Activated naive CD4-positive, alpha-beta T cell treated with anti-CD3 and anti-CD28 coated beads, Interleukin-2, amount 10 ng/mL, durations not matched to agents 7 days and 5 days (primary cell): ENCODE measurements at regions of chr5 and their contacts with region 1.

Region 1: GRCh38 chr5:74919487-74919886 is 53.3 kb upstream of the FAM169A start:
- DNase-seq: no peak
- H3K4me3 Mint-ChIP-seq: no peak overlapping the region
- H3K27ac Mint-ChIP-seq: no peak overlapping the region
- H3K4me1 Mint-ChIP-seq: no peaks in the 10 kb centered on the region
- H3K27me3 Mint-ChIP-seq: peaks cover 8% of the 10 kb centered on the region

Region 2: DNA sequence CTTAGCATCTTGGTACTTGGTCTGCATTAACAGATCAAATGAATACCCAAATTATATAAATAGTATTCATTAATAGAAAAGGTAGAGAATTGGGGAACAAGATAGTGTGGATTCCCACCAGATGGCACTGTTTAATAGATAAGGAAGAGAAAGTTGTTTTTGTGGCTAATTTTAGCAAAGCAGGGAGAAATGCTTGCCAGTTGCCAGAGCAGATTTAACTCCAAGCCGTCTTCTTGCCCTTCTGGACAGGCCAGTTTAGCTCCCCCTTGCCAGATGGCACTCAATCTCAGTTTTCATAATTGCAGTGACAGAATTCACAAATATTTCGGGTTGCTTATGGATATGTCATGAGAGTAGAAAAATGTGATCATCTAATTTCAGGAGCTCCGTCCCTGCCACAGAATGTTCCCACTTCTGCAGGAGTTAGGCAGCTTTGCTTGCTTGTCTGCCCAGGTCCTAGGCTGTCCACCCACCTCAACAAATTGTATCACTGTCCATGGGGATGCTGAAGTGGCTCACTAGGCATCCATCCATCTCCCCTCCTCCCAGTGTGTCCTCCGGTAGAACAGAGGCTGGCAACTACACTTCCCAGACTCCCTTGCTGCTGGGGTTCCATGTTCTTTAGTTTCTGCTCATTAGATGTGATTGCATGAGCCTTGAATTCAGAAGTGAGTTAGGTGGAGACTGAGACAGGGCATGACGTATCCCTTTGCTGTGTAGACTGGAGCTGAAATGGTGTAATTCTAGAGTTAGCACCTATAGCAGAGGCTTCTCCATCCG is 246.3 kb before region 1 on chr5:
- CTCF ChIA-PET with region 1: interaction called, 13 read pairs
- DNase-seq: no peak
- H3K4me3 Mint-ChIP-seq: no peak overlapping the region
- H3K27ac Mint-ChIP-seq: no peak overlapping the region
- H3K4me1 Mint-ChIP-seq: no peaks in the 10 kb centered on the region
- H3K27me3 Mint-ChIP-seq: peaks cover 20% of the 10 kb centered on the region

Region 3: DNA sequence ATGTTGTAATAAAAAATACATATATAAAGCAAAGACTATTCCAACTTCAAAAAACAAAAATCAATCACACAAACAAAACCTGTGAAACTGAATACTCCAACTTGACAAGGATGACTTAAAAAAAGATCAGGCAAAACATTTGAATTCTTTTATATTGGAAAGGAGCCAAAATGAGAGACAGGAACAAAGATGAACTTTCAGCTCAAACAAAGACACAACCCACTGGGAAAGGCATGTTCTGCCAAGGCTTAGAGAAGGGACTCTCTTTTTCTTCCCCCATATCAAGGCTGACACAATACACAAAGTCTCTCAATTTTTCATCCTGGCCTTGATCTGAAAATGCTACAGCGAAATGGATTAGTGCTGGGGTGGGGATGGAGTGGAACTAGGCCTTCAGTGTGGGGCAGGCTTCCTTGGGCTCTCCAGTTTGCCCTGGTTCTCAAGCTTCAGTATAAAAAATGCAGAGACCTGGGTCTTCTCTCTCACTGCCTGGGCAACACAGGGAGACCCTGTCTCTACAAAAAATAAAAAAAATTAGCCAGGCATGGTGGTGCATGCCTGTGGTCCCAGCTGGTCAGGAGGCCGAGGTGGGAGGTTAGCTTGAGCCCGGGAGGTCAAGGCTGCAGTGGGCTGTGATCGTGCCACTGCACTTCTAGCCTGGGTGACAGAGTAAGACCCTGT is 41.7 kb before region 1 on chr5:
- CTCF ChIA-PET with region 1: no interaction called
- DNase-seq: no peak
- H3K4me3 Mint-ChIP-seq: no peak overlapping the region
- H3K27ac Mint-ChIP-seq: no peak overlapping the region
- H3K4me1 Mint-ChIP-seq: no peaks in the 10 kb centered on the region
- H3K27me3 Mint-ChIP-seq: no peaks in the 10 kb centered on the region